ENCODE measurements at regions of chr20 and their contacts with region 1.

Region 1: DNA sequence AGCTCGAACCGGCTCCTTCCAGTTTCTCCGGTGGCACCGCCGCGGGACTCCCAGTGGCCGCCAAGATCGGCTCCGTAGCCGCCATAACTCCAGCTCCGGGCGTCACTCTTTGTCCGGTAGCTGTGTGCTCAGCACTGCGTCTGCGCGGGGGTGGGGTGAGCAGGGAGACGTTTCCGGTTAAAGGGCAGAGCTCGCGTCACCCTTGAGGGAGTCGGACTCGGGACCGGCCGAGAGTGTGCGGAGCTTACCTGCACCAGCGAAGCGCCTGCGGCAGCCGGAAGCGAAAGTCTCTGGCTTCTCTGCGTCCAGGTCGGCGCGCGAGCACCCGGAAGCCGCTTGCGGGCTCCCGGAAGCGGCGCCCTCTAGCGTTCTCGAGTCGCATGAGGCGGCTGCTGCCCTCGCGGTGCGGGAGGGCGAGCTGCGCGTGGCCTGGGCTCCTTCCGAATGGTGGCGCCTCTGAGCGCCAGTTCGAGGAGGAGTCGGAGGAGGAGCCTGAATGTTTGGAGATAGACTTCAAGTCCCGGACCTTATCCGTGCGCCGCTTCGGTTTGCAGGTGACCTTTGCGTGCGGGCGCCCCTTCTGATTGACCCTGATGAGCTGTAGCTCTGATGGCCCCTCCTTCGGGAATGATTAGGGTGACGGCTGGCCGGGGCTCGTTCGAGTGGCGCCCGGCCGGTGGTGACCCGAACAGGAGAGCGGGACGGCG is at the start of gene SCAND1:
- DNase-seq: peak; percentile 96 to 98 (median 98)
- H3K4me3 ChIP-seq: peak within 1 kb of the TSS; percentile 82 to 96 (median 90)
- H3K27ac ChIP-seq: peak within 1 kb of the TSS; percentile 91 to 97
- H3K4me1 ChIP-seq: peaks cover 9 to 26% (median 19%) of the 10 kb centered on the region in 4 experiments
- H3K27me3 ChIP-seq: no peaks in the 10 kb centered on the region

Region 2: DNA sequence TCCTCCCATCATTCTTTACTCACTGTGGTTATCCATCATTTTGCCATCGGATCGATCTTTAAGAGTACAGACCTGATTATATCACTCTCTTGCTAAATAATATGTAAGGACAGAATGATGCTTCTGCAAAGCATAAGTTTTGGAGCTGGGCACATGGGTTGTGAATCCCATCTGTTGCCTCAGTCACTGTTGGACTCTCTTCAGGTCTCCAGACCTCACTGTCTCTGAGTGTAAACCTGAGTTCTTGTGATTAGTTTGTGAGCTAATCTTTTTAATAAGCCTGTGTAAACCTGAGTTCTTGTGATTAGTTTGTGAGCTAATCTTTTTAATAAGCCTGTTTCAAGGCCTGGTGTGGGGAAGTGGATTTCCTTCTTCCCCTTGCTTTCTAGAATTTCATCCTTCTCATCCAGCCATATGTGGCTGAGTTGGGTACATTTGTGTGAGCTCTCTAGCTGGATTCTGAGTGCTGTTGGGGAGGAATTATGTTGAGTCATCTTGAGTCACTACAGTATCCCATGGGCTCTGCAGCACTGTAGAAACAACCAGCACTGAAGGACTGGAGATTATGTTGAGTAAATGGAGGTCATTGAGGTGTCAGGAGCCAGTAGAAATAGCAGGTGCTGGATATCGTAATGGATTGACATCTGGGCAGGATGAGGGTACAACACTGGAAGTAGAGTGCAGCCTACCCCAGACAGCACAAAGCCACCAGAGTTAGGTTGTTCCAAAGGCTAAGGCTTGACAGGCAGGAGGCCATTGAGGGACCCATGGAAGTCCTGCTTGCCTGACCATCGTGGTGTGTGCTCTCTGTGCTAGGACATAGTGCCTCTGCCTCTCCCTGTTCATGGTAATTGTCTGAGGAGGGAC is 52.4 kb before region 1 on chr20:
- CTCF ChIA-PET with region 1: no interaction called
- POLR2A ChIA-PET with region 1: no interaction called
- DNase-seq: peak in 2 of 3 donors; percentile 16 to 32
- H3K4me3 ChIP-seq: no peak overlapping the region
- H3K27ac ChIP-seq: no peak overlapping the region
- H3K4me1 ChIP-seq: peaks cover 0 to 2% (median 0%) of the 10 kb centered on the region in 4 experiments
- H3K27me3 ChIP-seq: no peaks in the 10 kb centered on the region

Region 3: DNA sequence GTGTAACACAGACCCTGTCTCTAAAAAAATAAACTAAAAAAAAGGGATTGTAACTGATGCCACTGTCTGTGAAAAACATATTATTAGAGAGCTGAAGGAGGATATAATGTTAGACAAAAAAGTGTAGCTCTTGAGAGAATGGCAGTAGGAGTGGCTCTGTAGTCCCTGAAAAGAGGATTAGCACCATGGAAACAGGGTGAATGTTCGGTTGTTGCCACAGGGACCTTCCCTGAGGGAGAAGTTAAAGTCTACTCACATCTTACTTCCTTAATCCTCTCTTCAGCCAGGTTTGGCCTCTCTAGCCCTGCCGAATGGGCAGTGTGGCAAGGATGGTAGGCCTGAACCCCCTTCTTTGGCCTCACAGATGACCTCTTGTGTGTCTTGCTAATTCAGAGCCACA is 12.1 kb before region 1 on chr20:
- CTCF ChIA-PET with region 1: interaction called, 29 read pairs
- POLR2A ChIA-PET with region 1: interaction called, 4 read pairs
- DNase-seq: no peak
- H3K4me3 ChIP-seq: no peak overlapping the region
- H3K27ac ChIP-seq: peak overlapping the region in 1 of 2 experiments; percentile 35
- H3K4me1 ChIP-seq: no peaks in the 10 kb centered on the region
- H3K27me3 ChIP-seq: no peaks in the 10 kb centered on the region

Region 4: GRCh38 chr20:35968931-35969330 is 14.6 kb after region 1 on chr20:
- CTCF ChIA-PET with region 1: interaction called, 21 read pairs
- POLR2A ChIA-PET with region 1: no interaction called
- DNase-seq: no peak
- H3K4me3 ChIP-seq: no peak overlapping the region
- H3K27ac ChIP-seq: no peak overlapping the region
- H3K4me1 ChIP-seq: no peaks in the 10 kb centered on the region
- H3K27me3 ChIP-seq: peaks cover 0 to 2% (median 0%) of the 10 kb centered on the region in 5 experiments

Measured in common myeloid progenitor, CD34-positive (primary cell).